Activated CD4-positive, alpha-beta T cell treated with anti-CD3 and anti-CD28 coated beads for 36 hours (primary cell): ENCODE measurements at regions of chr12 and their contacts with region 1.

Region 1: DNA sequence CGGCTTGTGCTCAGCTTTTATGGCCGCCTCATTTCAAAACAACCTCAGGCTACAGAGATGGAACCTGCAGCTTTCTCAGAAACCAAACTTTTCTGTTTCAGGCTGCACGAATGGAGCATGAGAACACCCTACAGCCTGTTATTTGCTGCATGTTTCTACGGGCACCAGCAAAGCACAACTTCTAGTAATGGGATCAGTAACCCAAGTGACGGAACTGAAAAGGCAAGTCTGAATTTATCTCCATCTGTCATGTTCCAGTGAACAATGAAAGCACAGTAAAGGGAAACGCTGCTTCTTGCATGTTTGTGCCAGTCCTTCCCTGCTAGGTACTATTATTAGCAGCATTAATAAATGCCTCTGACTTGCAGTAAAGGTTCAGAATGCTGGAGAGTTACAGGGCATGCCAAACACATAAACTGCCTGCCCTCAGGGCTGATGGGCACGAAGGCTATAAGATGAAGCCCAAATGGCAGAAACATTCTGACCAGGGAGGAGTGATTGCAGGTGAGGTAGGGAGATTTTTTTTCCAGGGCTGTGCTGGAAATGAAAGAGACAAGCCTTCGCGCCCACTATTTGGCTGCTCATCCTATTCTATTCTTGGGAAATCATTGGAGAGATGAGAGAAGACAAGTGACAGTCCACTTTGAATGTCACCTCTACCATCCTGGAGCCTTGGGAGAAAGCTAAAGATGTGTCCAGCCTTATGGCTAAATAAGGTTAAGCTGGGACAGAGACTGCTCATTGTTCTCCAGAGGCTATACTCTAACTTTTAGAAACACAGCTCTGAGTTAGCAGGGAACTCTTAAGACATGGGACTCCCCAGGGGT is 100.4 kb upstream of the PLXNC1 start:
- DNase-seq: no peak
- ATAC-seq: no peak
- H3K4me3 Mint-ChIP-seq: no peak overlapping the region
- H3K27ac Mint-ChIP-seq: no peak overlapping the region
- H3K4me1 Mint-ChIP-seq: peaks cover 13% of the 10 kb centered on the region
- H3K27me3 Mint-ChIP-seq: no peaks in the 10 kb centered on the region

Region 2: DNA sequence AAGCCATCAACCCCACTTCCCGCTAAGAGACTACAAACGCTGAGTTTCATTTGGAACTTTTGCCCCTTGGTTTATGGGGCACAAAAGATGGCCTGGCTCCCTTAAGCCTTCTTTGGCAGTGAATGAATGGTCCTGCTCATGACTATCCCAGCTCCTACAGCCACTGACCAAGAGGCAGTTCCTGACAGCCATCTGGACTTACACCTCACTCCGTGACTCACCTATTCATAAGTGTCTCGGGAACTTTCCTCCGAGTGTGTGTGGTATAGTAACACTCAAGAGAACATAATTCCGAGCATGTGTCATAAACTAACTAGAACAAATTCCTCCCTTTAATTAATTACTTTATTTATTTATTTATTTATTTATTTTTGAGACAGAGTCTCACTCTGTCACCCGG is 722.1 kb before region 1 on chr12:
- CTCF ChIA-PET with region 1: no interaction called
- POLR2A ChIA-PET with region 1: no interaction called
- intact Hi-C with region 1: no loop called
- DNase-seq: no peak
- ATAC-seq: no peak
- H3K4me3 Mint-ChIP-seq: no peak overlapping the region
- H3K27ac Mint-ChIP-seq: no peak overlapping the region
- H3K4me1 Mint-ChIP-seq: peaks cover 4% of the 10 kb centered on the region
- H3K27me3 Mint-ChIP-seq: no peaks in the 10 kb centered on the region

Region 3: GRCh38 chr12:93968536-93969285 is 79.2 kb before region 1 on chr12:
- CTCF ChIA-PET with region 1: no interaction called
- POLR2A ChIA-PET with region 1: no interaction called
- intact Hi-C with region 1: no loop called
- DNase-seq: no peak
- ATAC-seq: no peak
- H3K4me3 Mint-ChIP-seq: no peak overlapping the region
- H3K27ac Mint-ChIP-seq: no peak overlapping the region
- H3K4me1 Mint-ChIP-seq: peaks cover 6% of the 10 kb centered on the region
- H3K27me3 Mint-ChIP-seq: peaks cover 6% of the 10 kb centered on the region

Region 4: GRCh38 chr12:94074980-94075928 is 27.3 kb after region 1 on chr12:
- CTCF ChIA-PET with region 1: interaction called, 4 read pairs
- POLR2A ChIA-PET with region 1: no interaction called
- intact Hi-C with region 1: loop called in 1 of 2 experiments (anchors 1 kb)
- DNase-seq: peak; percentile 46
- ATAC-seq: peak; percentile 85
- H3K4me3 Mint-ChIP-seq: no peak overlapping the region
- H3K27ac Mint-ChIP-seq: peak overlapping the region; percentile 4
- H3K4me1 Mint-ChIP-seq: peaks cover 22% of the 10 kb centered on the region
- H3K27me3 Mint-ChIP-seq: peaks cover 6% of the 10 kb centered on the region

Region 5: DNA sequence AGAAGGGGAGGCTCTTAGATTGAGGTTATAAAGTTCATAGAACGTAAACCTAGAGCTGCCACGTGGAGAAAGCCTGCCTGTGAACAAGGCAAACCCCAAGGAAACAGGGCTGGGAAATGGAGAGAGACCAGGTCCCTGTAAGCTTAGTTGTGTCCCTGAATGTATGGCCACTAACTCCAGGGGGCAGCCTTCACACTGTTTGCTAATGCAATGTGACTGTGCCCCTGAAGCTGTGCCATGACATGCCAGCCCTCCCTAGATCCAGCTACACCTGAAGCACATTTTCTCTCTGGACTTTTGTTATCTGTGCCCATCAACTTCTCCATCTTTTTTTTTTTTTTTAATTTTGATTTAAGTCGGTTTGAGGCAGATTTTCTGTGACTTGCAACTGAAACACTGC is 663.0 kb after region 1 on chr12:
- CTCF ChIA-PET with region 1: no interaction called
- POLR2A ChIA-PET with region 1: no interaction called
- intact Hi-C with region 1: no loop called
- DNase-seq: peak; percentile 51
- ATAC-seq: no peak
- H3K4me3 Mint-ChIP-seq: no peak overlapping the region
- H3K27ac Mint-ChIP-seq: no peak overlapping the region
- H3K4me1 Mint-ChIP-seq: peaks cover 6% of the 10 kb centered on the region
- H3K27me3 Mint-ChIP-seq: peaks cover 2% of the 10 kb centered on the region